ENCODE measurements at regions of chr2 and their contacts with region 1.

Region 1: GRCh38 chr2:226984750-226985582 is 149.1 kb downstream of the RHBDD1 start:
- DNase-seq: peak; percentile 54
- CTCF ChIP-seq: peak; percentile 61

Region 2: GRCh38 chr2:225660262-225661131 is 1324.5 kb before region 1 on chr2:
- in situ Hi-C with region 1: loop called (anchors 25 kb)
- DNase-seq: peak; percentile 51
- CTCF ChIP-seq: peak; percentile 88

Region 3: DNA sequence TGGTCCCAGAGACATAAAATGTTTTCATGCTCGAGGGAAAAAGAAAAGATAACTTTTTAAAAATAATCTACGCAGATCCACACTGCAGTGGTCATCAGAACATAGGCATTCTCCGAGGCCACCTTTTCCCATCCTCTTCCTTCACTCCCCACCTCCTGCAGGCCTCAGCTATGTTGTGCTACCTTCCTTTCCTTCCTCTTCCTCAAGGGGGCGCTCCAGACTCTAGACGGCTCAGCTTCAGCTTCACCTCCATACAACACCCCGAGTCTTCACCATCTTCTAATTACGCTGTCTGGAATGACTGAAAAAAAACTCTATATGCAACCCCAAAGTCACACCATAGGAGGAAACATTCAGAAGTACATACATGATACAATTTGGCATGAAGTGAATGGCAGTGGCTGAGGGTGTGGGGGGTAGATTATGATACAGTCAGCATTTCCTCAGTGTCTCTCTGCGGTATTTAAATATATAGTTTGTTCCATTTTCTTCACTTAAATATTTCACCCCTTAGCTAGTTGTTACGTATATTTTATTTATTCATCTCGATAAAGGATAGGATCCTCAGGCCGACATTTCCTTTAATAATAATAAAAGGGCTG is 769.0 kb before region 1 on chr2:
- in situ Hi-C with region 1: loop called (anchors 25 kb)
- DNase-seq: peak; percentile 19
- CTCF ChIP-seq: peak; percentile 75

Region 4: DNA sequence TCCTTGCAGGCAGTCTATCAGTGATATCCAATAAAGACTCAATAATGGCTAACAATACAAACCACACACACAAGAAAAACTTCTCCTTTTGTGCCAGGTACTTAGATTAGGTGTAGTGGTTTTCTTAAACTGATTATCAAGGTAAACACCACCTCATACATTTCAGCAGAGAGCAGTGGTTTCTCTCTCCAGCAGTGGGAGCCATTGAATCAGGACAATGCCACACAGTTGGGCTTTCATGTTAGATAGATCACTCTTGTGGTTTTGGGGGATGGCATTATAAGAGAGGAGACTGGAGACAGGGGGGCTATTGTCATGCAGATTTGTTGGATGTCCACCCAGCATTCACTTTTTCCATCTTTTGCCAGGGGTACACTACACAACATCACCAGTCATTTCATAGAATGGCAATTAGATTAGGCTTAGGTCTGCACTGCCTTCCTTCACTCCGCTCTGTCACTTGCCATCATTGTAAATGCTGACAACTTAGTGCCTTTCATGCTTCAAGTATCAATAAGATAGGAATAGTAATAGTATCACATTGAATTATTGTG is 171.7 kb before region 1 on chr2:
- in situ Hi-C with region 1: loop called (anchors 5 kb)
- DNase-seq: no peak
- CTCF ChIP-seq: peak; percentile 59

Region 5: GRCh38 chr2:227057060-227057459 is 72.1 kb after region 1 on chr2:
- in situ Hi-C with region 1: no loop called
- DNase-seq: no peak
- CTCF ChIP-seq: no peak